BJ (cell line): ENCODE measurements at regions of chr6 and their contacts with region 1.

Region 1: DNA sequence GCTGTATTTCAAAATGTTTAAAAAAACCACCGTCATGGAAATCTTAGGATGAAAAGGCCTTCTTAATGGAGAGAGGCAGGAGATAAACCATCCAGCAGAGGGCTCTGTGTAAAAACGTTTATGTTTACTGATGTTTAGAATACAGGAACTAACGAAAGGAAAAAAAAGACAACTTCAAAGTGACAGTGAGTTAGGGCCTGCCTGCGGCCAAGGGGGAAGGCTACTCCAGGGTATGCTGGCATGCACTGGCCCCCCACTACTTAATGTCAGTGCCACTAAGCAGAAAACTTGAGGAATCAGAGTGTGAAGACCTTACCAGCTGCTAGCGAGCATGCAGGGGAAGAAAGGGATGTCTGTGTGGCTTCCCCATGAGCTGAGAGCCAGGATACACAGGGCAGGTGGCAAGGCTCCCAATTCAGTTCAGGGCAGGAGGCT is 47.7 kb downstream of the AKAP7 start:
- DNase-seq: no peak
- H3K4me3 ChIP-seq: no peak overlapping the region
- H3K27me3 ChIP-seq: no peaks in the 10 kb centered on the region
- CTCF ChIP-seq: peak; percentile 64

Region 2: DNA sequence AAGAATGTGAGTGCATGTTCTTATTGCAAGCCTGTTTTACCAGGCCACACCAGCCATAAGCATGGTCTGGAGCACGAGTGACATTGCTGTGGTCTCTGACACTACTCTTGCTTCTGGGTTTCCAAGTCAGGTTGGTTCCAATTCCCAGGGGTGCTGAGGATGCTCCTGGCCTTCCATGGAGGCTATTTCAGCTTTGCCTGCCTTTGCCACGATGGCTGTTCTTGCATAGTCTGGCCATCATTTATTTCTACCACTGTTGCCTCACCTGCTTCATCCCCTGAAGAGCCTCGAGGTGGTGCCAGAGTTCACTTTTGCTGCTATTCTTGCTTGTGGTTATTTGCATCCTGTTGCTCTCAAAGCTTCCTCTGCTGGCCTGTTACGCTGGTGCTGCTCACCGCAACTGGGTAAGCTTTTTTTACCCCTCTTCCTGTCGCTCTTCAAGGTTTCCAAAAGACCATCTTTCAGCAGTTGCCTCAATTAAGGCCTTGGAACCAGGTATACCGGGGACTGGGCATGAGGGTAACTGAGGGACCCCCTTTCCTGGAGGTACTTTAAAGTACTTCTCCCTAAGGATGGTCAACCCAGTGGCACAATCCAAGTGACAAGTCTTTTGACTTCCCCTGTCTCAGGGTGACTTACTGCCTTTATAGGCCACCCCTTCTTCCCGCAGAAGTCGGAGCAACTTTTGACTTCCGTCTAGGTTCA is 16.7 kb after region 1 on chr6:
- CTCF ChIA-PET with region 1: interaction called, 15 read pairs
- POLR2A ChIA-PET with region 1: no interaction called
- DNase-seq: no peak
- H3K4me3 ChIP-seq: no peak overlapping the region
- H3K27me3 ChIP-seq: no peaks in the 10 kb centered on the region
- CTCF ChIP-seq: peak; percentile 79